SK-N-SH (cell line): ENCODE measurements at regions of chr10 and their contacts with region 1.

Region 1: DNA sequence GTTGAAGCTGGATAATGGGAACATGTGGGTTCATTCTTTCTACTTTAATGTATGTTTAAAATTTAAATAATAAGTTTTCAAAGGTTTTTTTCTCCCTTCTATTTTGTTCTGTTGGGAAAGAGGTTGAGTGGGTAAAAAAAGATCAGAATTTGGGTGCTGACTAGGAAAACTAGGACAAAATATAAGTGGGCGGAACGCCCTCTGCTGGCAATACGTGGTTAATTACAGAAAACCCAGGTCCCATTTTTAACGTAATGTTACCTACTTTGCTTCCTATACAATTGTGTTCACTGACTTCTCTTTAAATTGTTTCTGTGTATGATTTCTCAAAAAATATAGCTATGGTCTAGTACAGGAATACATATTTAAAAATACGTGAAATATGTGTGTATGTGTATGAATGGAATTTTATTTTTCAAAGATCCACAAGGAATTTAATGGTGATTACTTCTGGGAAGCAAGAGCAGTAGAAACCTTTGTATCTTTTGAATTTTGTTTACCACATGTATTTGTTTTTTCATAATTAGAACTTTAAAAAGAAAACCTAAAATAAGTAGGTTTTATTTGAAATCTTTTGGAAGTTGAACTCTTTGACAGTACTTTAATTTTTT is 8.7 kb downstream of the ECD start:
- DNase-seq: peak; percentile 59
- H3K4me3 ChIP-seq: no peak overlapping the region; a peak in 1 of 4 replicates
- H3K27ac ChIP-seq: no peak overlapping the region
- H3K4me1 ChIP-seq: no peaks in the 10 kb centered on the region
- H3K27me3 ChIP-seq: no peaks in the 10 kb centered on the region
- CTCF ChIP-seq: peak; percentile 89
- EP300 ChIP-seq: no peak
- RAD21 ChIP-seq: peak; percentile 67

Region 2: DNA sequence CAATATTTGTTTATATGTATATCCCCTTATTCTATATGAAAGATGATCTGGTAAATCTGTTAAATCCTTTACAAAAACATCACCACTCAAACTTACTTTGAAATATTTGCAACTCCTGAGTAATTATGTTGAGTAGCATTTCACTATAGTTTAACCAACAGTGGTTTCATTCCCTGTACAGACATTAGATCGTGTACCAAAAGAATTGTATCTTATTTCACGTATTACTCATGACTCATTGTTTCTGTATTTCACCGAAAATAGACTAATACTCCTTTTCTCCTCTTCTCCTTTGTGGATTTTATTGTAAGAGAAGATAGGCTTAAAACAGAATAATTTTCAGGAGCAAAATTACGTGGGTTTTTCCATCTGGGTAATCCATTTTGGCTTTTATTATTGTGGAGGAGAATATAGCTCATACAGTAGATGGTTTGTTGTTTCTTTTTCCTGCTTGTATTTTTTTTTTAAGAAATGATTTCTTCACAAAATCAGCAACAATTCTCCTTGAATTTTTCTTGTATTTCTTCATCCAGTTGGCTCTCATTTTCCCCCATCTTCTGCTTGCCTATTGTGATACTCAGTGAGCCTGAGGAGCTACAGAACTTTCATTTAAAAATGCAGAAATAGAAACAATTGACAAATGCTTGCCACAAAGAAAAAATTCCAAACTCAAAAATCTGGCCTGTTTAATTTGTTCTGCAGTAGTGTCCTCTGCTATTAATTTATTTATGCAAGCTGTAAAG is 356.2 kb before region 1 on chr10:
- CTCF ChIA-PET with region 1: no interaction called
- POLR2A ChIA-PET with region 1: no interaction called
- DNase-seq: no peak
- H3K4me3 ChIP-seq: peak overlapping the region; percentile 2 to 10; a peak in 3 of 4 replicates
- H3K27ac ChIP-seq: peak overlapping the region; percentile 72 to 77; a peak in 3 of 4 replicates
- H3K4me1 ChIP-seq: peaks cover 6 to 9% of the 10 kb centered on the region in 2 experiments; a peak in 3 of 4 replicates
- H3K27me3 ChIP-seq: no peaks in the 10 kb centered on the region
- CTCF ChIP-seq: no peak
- EP300 ChIP-seq: no peak
- RAD21 ChIP-seq: no peak

Region 3: DNA sequence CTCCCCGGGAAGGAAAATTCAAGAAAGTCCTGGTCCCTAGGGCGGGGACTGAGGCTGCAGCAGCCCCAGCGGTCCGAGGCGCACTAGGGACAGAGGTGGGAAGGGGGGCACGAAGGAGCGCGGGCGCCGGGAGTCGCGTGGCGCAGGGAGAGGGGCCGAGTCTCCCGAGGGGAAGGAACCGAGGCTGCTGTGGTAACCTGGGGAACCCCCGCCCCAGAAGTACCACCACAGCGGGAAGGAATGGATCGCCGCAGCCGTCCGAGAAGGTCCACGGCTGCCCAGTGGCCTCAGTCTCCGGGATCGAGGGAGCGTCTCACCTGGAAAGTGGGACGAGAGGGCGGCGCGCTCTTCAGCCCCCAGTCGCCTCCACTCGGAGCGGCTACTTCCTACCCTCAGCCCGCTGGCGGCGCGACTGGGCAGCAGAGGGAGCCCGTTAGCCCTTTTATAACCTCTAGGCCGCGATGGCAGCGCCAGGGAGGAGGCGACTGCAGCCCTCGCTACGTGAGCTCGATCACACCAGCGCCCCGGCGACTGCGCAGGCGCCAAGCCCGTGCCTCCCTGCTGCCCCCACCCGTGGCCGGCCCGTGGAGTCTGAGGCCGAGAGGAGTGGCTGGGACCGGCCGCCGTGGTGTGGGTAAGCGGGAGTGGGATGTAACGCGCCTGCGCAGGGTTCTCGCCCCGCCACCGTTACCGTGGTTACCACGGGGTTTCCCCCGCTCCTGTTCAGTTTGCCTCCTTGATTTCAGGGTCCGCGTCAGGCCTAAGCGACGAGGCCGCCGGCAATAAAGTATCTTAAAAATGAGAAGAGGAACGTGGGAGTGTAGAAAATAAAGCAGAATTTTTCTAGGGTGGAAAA is 62.5 kb before region 1 on chr10 and contains the start of gene P4HA1:
- CTCF ChIA-PET with region 1: interaction called, 19 read pairs
- POLR2A ChIA-PET with region 1: no interaction called
- DNase-seq: peak; percentile 98
- H3K4me3 ChIP-seq: peak within 1 kb of the TSS; percentile 84 to 87
- H3K27ac ChIP-seq: peak within 1 kb of the TSS; percentile 96 to 97
- H3K4me1 ChIP-seq: peaks cover 4% of the 10 kb centered on the region in 2 experiments; a peak in 3 of 4 replicates
- H3K27me3 ChIP-seq: no peaks in the 10 kb centered on the region
- CTCF ChIP-seq: peak; percentile 65
- EP300 ChIP-seq: 0 out of 4 replicates have a peak, but pooled peaks of 1 of the 2 experiments have one; percentile 7
- RAD21 ChIP-seq: peak; percentile 68
- polyA plus RNA-seq, gene P4HA1: 34.8 and 52.0 TPM in 2 replicates

Region 4: GRCh38 chr10:73131301-73131700 is 27.8 kb before region 1 on chr10:
- CTCF ChIA-PET with region 1: interaction called, 25 read pairs
- POLR2A ChIA-PET with region 1: no interaction called
- DNase-seq: no peak
- H3K4me3 ChIP-seq: no peak overlapping the region
- H3K27ac ChIP-seq: no peak overlapping the region
- H3K4me1 ChIP-seq: no peaks in the 10 kb centered on the region
- H3K27me3 ChIP-seq: no peaks in the 10 kb centered on the region
- CTCF ChIP-seq: no peak
- EP300 ChIP-seq: no peak
- RAD21 ChIP-seq: no peak

Region 5: GRCh38 chr10:73139251-73139650 is 19.9 kb before region 1 on chr10:
- CTCF ChIA-PET with region 1: interaction called, 39 read pairs
- POLR2A ChIA-PET with region 1: no interaction called
- DNase-seq: no peak
- H3K4me3 ChIP-seq: no peak overlapping the region
- H3K27ac ChIP-seq: no peak overlapping the region
- H3K4me1 ChIP-seq: no peaks in the 10 kb centered on the region
- H3K27me3 ChIP-seq: no peaks in the 10 kb centered on the region
- CTCF ChIP-seq: no peak
- EP300 ChIP-seq: no peak
- RAD21 ChIP-seq: no peak

Region 6: GRCh38 chr10:73296946-73297345 is 137.8 kb after region 1 on chr10:
- CTCF ChIA-PET with region 1: no interaction called
- POLR2A ChIA-PET with region 1: no interaction called
- DNase-seq: no peak
- H3K4me3 ChIP-seq: no peak overlapping the region
- H3K27ac ChIP-seq: no peak overlapping the region
- H3K4me1 ChIP-seq: no peaks in the 10 kb centered on the region
- H3K27me3 ChIP-seq: no peaks in the 10 kb centered on the region
- CTCF ChIP-seq: no peak
- EP300 ChIP-seq: no peak
- RAD21 ChIP-seq: no peak